ENCODE measurements at regions of chr19 and their contacts with region 1.

Region 1: GRCh38 chr19:37466798-37467607 is at the start of gene ZNF569:
- DNase-seq: peak; percentile 92 to 97 (median 94)
- H3K4me3 ChIP-seq: peak within 1 kb of the TSS; percentile 67 to 100 (median 91)
- H3K27ac ChIP-seq: peak within 1 kb of the TSS; percentile 63 to 99 (median 96)
- H3K27me3 ChIP-seq: no peaks in the 10 kb centered on the region
- CTCF ChIP-seq: peak in 30 of 56 donors; percentile 6 to 49 (median 26)
- total RNA-seq, gene ZNF569: 8.0 to 18.7 (median 13.3) TPM

Region 2: DNA sequence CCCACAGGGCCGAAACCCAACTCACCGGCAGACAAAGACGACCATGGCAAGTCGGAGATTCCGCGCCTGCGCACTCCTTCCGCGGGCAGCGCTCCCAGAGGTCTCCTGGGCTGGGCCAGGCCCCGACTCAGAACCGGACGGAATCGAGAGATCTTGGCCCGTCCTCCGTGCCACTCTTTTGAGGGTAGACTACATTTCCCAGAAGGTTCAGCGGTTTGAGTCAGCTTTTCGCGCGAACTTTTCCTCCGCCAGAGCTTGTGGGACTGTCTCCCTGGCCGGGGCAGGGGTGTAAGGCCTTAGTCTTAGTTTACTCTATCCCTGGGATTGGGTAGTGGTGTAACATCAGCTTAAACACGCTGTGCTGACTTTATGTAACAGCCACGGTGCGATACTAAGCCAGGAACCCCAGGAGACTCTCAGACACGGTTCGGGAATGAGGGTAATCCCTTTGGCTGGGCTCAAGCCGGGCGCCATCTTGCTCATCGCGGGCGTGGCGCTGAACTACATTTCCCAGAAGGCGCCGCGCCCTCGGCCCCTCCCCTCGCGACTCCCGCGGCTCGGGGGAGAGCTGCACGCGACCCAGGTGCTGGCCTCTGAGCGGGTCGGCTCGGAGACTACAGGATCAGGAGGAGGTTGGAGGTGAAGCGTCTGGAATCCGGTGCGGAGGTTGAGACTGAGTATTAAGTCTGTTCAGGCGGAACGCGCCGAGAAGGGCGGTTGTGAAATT is 938.6 kb before region 1 on chr19 and contains the start of gene ZNF260:
- intact Hi-C with region 1: loop called (anchors 2 kb)
- DNase-seq: peak; percentile 96 to 98 (median 97)
- H3K4me3 ChIP-seq: peak within 1 kb of the TSS; percentile 57 to 100 (median 82)
- H3K27ac ChIP-seq: peak within 1 kb of the TSS; percentile 87 to 100 (median 97)
- H3K27me3 ChIP-seq: no peaks in the 10 kb centered on the region
- CTCF ChIP-seq: peak in 14 of 56 donors; percentile 5 to 49 (median 16)
- total RNA-seq, gene ZNF260: 10.1 to 24.3 (median 14.8) TPM

Region 3: DNA sequence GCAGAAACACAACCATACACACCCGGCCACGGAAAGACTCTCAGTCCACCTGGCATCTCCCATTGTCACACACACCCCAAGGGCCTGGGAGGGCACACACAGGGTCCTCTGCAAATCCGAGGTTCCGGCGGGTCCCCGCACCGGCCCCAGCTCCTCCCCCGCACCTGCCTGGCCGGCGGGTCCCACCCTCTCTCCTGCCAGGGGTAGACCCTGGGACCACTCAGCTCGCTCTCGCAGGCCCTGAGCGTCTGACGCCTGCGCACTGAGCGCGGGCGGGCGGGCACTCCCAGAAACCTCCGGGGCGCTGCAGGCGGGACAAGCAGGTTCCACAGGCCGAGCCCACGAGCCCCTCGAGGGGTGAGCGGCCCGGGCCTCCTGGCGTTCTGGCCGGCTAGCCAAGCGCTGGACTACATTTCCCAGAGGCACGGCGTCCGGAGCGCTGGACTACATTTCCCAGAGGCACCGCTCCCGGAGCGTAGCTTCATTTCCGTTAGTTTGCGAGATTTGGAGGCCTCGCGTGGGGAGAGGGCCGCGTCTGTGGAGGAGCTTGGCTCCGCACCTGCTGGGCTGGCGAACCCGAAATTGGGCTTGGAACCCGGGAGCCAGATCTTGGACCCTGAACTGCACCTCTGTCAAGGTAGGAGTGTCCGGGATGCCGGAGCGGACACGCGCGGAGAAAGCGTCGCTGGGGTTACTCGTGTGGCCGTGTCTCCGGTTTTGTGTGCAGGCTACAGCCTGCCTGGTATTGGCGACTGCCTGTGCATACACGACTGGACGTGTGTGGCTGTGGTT is 388.9 kb before region 1 on chr19 and contains the start of gene ZNF420:
- intact Hi-C with region 1: loop called (anchors 5 kb)
- DNase-seq: peak; percentile 87 to 96 (median 94)
- H3K4me3 ChIP-seq: peak within 1 kb of the TSS; percentile 65 to 99 (median 90)
- H3K27ac ChIP-seq: peak within 1 kb of the TSS; percentile 36 to 97 (median 88)
- H3K27me3 ChIP-seq: no peaks in the 10 kb centered on the region
- CTCF ChIP-seq: peak in 36 of 56 donors; percentile 5 to 61 (median 30)
- total RNA-seq, gene ZNF420: 12.8 to 34.4 (median 22.6) TPM

Region 4: DNA sequence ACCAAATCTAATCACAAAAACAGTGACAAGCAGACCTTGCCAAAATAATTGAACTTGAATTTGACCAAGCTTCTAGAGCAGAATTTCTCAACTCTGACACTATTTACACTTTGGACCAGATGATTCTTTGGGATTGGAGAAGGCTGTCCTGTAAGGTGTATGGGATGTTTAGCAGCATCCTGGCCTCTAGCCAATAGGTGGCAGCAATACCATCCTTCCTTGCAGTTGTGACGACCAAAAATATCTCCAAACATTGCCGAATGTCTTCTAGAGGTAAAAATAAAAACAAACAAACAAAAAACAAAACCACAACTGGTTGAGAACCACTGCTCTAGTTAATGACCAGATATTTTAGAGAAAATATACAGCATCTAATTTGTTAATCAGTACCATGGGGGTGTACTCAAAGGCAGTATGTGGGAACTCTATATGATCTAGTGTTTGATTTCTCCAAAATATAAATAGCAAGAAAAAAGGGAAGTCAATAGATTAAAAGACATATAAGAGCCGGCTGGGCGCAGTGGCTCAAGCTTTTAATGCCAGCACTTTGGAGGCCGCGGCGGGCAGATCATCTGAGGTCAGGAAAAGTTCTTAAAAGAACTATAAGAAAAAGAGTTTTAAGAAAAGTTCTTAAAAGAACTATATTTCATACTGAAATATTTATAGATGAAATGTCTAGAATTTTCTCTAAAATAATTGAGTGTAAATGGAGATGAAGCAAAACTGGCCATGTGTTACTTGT is 157.0 kb before region 1 on chr19:
- intact Hi-C with region 1: loop called in 1 of 2 experiments (anchors 10 kb)
- DNase-seq: no peak
- H3K4me3 ChIP-seq: no peak overlapping the region
- H3K27ac ChIP-seq: no peak overlapping the region
- H3K27me3 ChIP-seq: no peaks in the 10 kb centered on the region
- CTCF ChIP-seq: peak in 1 of 56 donors; percentile 6

Region 5: GRCh38 chr19:37594304-37594981 is 127.4 kb after region 1 on chr19 and contains the starts of genes ZNF540 and ZNF571:
- intact Hi-C with region 1: loop called (anchors 2 to 10 kb)
- DNase-seq: peak; percentile 92 to 97 (median 95)
- H3K4me3 ChIP-seq: peak within 1 kb of the TSS; percentile 61 to 98 (median 85)
- H3K27ac ChIP-seq: peak within 1 kb of the TSS; percentile 73 to 98 (median 94)
- H3K27me3 ChIP-seq: no peaks in the 10 kb centered on the region
- CTCF ChIP-seq: peak in 16 of 56 donors; percentile 3 to 36 (median 14)
- total RNA-seq, gene ZNF540: 15.8 to 44.6 (median 29.0) TPM
- total RNA-seq, gene ZNF571: 6.7 to 27.7 (median 12.5) TPM